Esophagus muscularis mucosa (tissue), 4 donors: ENCODE measurements at regions of chr9 and their contacts with region 1.

Region 1: DNA sequence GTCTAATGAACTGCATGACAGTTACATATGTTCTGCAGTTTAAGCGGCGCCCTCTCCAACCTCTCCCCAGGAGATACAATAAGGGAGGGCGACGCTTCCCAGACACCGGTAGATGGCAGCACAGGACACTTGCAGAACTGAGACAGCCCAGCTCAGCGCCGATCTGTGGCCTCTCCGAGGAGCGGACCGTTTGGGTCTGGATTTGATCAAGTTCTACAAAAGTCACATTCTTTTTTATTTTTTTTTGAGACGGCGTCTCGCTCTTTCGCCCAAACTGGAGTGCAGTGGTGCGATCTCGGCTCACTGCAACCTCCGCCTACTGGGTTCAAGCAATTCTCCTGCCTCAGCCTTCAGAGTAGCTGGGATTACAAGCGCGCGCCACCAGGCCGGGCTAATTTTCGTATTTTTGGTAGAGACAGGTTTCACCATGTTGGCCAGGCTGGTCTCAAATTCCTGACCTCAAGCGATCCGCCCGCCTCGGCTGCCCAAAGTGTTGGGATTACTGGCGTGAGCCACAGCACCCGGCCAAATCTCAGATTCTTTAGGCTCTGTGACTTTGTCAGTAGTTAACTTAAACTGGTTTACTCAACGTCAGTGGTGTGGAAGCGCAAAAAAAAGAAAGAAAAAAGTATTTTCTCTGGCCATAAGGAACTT is 1.4 kb upstream of the ATOSB start:
- DNase-seq: peak; percentile 96
- H3K4me3 ChIP-seq: peak overlapping the region; percentile 60 to 75 (median 62)
- H3K27ac ChIP-seq: peak overlapping the region; percentile 83 to 93 (median 89)
- H3K4me1 ChIP-seq: peaks cover 44 to 50% (median 49%) of the 10 kb centered on the region in 4 donors
- H3K27me3 ChIP-seq: no peaks in the 10 kb centered on the region
- CTCF ChIP-seq: peak; percentile 94 to 97 (median 96)
- EP300 ChIP-seq: no peak
- POLR2A ChIP-seq: no peak

Region 2: GRCh38 chr9:35161713-35162604 is 44.9 kb after region 1 on chr9 and contains the start of gene UNC13B:
- intact Hi-C with region 1: loop called (anchors 5 kb)
- DNase-seq: peak; percentile 98
- H3K4me3 ChIP-seq: peak within 1 kb of the TSS; percentile 76 to 94 (median 82)
- H3K27ac ChIP-seq: peak within 1 kb of the TSS; percentile 92 to 97 (median 94)
- H3K4me1 ChIP-seq: peaks cover 7 to 35% (median 28%) of the 10 kb centered on the region in 4 donors
- H3K27me3 ChIP-seq: no peaks in the 10 kb centered on the region
- CTCF ChIP-seq: peak in 2 of 3 experiments; percentile 7 to 9
- EP300 ChIP-seq: no peak
- POLR2A ChIP-seq: peak; percentile 35
- total RNA-seq, gene UNC13B: 21.9 to 30.7 (median 28.7) TPM

Region 3: DNA sequence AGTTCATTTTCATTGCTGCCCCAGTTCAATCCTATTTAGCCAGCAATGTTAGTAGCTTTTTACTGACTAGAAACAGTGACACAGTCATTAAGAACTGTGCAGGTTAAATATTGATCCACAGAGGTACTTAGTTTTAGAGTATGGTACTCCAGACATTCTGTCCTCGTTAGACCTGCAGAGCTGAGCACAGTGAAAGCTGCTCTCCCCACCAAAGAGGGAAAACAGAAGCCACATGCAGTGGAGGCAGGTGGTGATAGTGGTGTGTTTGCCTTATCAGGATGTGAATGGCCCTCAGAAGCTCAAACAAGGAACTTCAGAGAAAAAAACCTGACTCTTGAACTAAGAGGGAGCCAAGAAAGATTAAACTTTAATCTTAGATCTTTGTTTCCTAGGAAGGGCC is 120.3 kb after region 1 on chr9:
- intact Hi-C with region 1: no loop called
- DNase-seq: no peak
- H3K4me3 ChIP-seq: no peak overlapping the region
- H3K27ac ChIP-seq: no peak overlapping the region
- H3K4me1 ChIP-seq: no peaks in the 10 kb centered on the region
- H3K27me3 ChIP-seq: no peaks in the 10 kb centered on the region
- CTCF ChIP-seq: no peak
- EP300 ChIP-seq: no peak
- POLR2A ChIP-seq: no peak

Region 4: DNA sequence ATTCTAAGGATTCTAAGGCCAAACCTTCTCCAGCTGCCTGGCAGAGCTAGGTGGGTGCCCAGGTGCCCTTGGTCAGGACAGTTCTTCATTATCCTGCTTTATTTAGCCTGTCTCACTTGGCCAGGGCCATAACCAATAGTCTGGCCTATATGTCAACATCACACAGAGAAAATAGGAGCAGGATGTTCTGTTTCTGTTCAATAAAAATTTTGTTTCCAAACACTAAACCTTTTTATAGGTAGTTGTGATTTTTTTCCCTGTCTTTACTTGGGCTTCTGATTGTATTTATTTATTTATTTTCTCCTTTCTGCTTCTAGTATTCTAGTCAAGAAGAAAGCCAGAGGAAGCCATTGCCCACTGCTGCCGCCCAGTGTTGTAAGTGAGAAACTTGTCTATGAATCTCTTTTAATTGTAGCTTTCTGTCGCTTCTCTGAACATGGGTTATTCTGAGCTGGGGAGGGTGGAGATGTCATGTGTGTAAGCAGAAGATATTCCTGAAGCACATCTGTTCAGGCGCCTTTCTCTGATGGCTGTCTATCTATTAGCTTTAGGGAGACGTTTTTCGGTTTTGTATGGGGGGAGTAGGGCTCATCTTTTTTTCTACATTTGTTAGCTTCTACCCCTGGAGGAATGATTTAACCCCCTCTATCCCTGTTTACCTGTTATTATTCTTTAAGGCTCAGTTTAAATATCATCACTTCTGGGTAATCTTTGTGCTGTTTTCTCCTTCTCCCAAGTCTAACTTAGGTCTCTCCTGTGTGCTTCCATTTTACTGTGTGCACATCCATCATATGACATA is 141.8 kb after region 1 on chr9:
- intact Hi-C with region 1: loop called (anchors 1 kb)
- DNase-seq: no peak
- H3K4me3 ChIP-seq: no peak overlapping the region
- H3K27ac ChIP-seq: no peak overlapping the region
- H3K4me1 ChIP-seq: no peaks in the 10 kb centered on the region
- H3K27me3 ChIP-seq: no peaks in the 10 kb centered on the region
- CTCF ChIP-seq: peak; percentile 51 to 70 (median 61)
- EP300 ChIP-seq: no peak
- POLR2A ChIP-seq: no peak

Region 5: DNA sequence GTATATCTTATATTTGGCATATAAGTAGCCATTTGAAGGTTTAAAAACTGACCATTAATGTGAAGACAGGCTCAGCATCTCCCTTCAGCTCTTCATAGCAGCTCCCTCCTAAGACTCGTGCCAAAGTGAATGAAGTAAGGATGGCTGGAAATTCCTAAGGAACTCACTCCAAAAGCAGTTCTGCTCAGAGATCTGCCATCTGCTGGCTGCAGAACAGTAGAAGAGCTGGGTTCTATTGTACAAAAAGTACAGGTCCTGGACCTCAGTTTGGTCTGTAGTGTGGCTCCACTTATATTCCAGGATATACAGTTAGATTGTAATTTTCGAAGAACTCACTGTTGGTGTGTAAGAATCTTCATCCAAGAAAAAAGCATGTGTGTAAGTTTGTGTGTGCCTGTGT is 268.0 kb after region 1 on chr9:
- intact Hi-C with region 1: loop called (anchors 10 kb)
- DNase-seq: no peak
- H3K4me3 ChIP-seq: no peak overlapping the region
- H3K27ac ChIP-seq: no peak overlapping the region
- H3K4me1 ChIP-seq: no peaks in the 10 kb centered on the region
- H3K27me3 ChIP-seq: no peaks in the 10 kb centered on the region
- CTCF ChIP-seq: peak in 2 of 3 experiments; percentile 16 to 18
- EP300 ChIP-seq: no peak
- POLR2A ChIP-seq: no peak

Region 6: DNA sequence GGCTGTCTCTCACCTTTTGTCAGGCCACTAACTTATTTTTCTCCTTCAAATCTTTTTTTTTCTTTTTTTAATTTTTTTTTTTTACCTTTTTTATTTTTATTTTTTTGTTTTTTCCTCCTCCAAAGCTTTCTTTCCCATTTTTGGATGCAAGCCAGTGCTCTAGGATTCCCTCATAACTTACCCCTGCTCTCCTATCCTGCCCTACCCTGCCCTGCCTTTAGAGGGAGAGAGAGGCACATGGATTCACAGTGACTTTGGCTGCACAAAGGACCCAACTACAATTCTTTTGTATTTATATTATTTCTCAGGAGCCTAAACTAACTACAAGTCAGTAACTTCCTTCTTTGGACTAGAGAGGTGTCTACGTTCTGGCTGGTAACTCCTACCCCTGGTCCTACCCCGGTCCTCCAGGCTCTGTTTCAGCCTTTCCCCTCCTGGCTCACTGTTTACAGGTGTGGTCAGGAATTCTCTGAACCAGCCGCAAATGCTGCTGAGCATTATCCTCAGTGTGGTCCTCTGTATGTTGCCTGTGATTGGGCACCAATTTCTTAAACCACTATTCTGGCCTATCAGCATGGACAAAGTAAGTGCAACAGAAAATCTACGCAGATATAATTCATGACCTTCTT is 364.4 kb after region 1 on chr9:
- intact Hi-C with region 1: loop called (anchors 1 kb)
- DNase-seq: no peak
- H3K4me3 ChIP-seq: no peak overlapping the region
- H3K27ac ChIP-seq: no peak overlapping the region
- H3K4me1 ChIP-seq: peaks cover 4 to 14% (median 6%) of the 10 kb centered on the region in 4 donors
- H3K27me3 ChIP-seq: no peaks in the 10 kb centered on the region
- CTCF ChIP-seq: peak; percentile 72 to 88 (median 86)
- EP300 ChIP-seq: no peak
- POLR2A ChIP-seq: no peak

Region 7: GRCh38 chr9:35553670-35554543 is 436.9 kb after region 1 on chr9:
- intact Hi-C with region 1: loop called (anchors 5 kb)
- DNase-seq: no peak
- H3K4me3 ChIP-seq: peak overlapping the region in 1 of 4 donors; percentile 3
- H3K27ac ChIP-seq: peak overlapping the region; percentile 70 to 84 (median 76)
- H3K4me1 ChIP-seq: peaks cover 18 to 53% (median 49%) of the 10 kb centered on the region in 4 donors
- H3K27me3 ChIP-seq: no peaks in the 10 kb centered on the region
- CTCF ChIP-seq: peak; percentile 90 to 96 (median 91)
- EP300 ChIP-seq: no peak
- POLR2A ChIP-seq: no peak